ENCODE measurements at regions of chr6 and their contacts with region 1.

Region 1: GRCh38 chr6:53718597-53719460 is 53.3 kb upstream of the KLHL31 start:
- DNase-seq: peak; percentile 45
- H3K4me3 ChIP-seq: no peak overlapping the region; a peak in 1 of 4 replicates
- H3K27ac ChIP-seq: no peak overlapping the region
- H3K4me1 ChIP-seq: no peaks in the 10 kb centered on the region
- H3K27me3 ChIP-seq: peaks cover 37% of the 10 kb centered on the region; the same call in 1 of the 2 replicates
- CTCF ChIP-seq: peak; percentile 84
- EP300 ChIP-seq: no peak
- RAD21 ChIP-seq: peak; percentile 54

Region 2: DNA sequence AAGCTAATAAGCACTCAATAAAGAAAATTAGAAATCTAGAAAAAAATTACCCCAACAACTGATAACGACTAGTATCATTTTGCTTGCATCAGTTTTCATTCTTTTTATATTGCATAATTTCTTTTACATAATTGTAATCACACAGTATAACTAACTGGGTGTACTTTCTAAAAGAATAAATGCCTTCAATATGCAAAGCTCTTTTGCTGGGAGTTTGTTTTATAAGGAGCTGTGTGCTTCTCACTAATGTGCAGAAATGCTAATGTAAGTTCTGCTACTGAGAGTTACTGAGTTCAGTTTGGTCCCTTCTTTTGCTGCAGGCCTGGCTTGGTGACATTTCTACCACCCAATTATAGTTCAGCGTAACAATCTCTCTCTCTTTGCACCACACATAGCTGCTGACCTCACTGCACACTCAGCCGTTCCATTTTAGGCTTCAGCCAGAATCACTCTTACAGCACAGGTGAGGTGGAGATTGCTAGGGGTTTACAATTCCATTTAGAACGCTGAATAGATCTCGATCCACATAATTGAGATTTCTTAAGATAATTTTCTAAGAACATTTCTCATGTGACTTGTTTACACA is 32.4 kb before region 1 on chr6:
- CTCF ChIA-PET with region 1: interaction called, 16 read pairs
- POLR2A ChIA-PET with region 1: no interaction called
- DNase-seq: no peak
- H3K4me3 ChIP-seq: no peak overlapping the region
- H3K27ac ChIP-seq: no peak overlapping the region
- H3K4me1 ChIP-seq: no peaks in the 10 kb centered on the region
- H3K27me3 ChIP-seq: no peaks in the 10 kb centered on the region; the same call in 1 of the 2 replicates
- CTCF ChIP-seq: no peak
- EP300 ChIP-seq: no peak
- RAD21 ChIP-seq: no peak

Region 3: DNA sequence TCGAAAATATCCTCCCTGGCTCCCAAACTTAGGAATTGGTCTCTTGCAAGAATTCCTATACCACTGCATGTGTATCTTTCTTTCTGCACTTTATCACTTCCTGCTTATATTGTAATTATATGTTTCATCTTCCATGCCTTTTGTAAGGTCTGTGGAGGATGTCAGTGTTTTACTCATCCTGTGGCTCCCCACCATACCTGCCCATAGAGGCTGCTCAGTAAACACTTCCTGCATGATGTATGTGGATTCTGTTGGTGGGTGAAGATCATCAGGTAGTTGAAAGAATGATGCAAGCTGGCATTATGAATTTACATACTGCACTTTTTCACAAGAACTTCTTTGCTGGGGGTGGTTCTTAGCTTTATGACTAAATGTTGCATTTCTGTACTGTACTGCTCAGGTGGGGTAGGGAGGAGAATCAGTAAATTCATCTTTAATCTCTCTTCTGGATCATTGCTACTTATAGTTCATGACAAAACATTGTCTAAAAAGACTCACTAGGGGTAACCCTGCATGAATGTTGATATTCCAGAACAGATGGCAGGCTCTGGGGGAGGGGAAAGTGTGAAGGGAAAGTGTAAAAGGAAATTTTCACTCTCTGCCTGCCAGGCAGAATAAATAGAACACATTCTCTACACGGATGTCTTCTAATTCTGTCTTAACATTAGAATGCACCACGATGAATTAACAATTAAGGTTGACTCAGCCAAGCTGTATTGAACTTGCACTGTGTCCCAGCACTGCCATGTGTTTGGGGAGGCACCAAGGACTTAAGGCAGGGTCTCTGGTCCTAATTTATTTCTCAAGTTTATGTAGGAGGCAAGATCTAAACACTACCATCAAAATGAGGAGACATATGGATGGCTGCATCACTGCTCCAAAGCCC is 17.3 kb before region 1 on chr6:
- CTCF ChIA-PET with region 1: interaction called, 154 read pairs
- POLR2A ChIA-PET with region 1: no interaction called
- DNase-seq: no peak
- H3K4me3 ChIP-seq: no peak overlapping the region
- H3K27ac ChIP-seq: no peak overlapping the region
- H3K4me1 ChIP-seq: no peaks in the 10 kb centered on the region
- H3K27me3 ChIP-seq: peaks cover 3% of the 10 kb centered on the region; the same call in 1 of the 2 replicates
- CTCF ChIP-seq: no peak
- EP300 ChIP-seq: no peak
- RAD21 ChIP-seq: no peak

Region 4: DNA sequence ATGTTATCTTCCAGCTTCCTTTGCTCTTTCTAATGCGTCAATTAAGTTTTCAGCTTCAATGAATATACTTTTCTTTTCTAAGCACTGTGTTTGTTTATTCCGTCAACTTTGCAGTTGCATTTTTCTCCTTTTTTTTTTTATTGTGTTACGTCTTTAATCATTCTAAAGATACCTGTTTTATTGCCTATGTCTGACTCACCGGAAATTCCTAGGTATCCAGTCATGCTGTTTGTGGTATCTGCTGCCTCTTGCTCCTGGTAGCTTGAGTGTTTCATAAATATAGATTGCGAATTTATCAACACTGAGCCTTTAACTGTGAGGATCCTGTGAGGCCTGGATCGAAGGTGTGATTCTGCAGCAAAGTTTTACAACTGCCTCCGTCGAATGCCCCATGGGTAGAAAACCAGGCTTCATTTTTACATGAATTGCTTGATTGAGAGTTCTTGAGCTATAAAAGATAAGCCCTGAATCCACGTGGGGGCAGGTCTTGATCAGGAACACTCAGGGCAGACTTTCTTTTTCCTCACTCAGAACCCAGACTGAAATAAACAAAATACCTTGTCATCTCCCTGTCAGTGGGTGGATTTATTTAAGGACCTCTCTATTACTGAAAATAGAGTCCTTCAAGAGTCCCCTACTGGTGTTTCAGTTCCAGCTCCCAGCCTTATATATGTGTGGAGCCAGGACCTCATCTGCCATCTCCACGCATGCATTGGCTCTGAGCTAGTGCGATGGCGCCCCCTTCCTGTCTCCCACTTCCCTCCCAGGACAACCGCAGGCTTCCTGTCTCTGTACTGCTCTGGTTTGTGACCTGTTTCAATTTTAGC is 15.9 kb after region 1 on chr6:
- CTCF ChIA-PET with region 1: interaction called, 154 read pairs
- POLR2A ChIA-PET with region 1: no interaction called
- DNase-seq: peak; percentile 9
- H3K4me3 ChIP-seq: peak overlapping the region in 1 of 2 experiments; percentile 14; a peak in 1 of 4 replicates
- H3K27ac ChIP-seq: peak overlapping the region; percentile 1 to 28; a peak in 1 of 4 replicates
- H3K4me1 ChIP-seq: no peaks in the 10 kb centered on the region; a peak in 2 of 4 replicates
- H3K27me3 ChIP-seq: no peaks in the 10 kb centered on the region
- CTCF ChIP-seq: peak; percentile 46
- EP300 ChIP-seq: 0 out of 4 replicates have a peak, but pooled peaks of 1 of the 2 experiments have one; percentile 17
- RAD21 ChIP-seq: 0 out of 2 replicates have a peak, but pooled peaks have one; percentile 7

Region 5: DNA sequence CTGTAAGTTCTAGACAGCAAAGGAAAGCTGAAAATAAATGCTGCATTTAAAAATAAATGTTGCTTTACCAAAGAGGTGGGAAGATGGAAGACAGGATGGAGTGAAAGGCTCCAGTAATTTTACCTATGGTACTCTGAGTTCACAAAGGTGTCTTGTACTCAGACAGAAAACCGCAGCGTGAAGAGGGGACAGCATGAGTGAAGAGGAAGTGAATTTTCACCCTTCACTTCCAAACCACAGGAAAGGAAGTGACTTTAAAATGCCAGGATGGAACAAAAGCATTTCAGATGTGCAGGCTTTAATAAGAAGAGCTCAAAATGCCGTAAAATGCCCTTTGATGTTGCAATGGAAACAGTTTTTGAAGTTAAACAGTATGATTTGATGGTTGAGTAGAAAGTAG is 498.2 kb after region 1 on chr6:
- CTCF ChIA-PET with region 1: no interaction called
- POLR2A ChIA-PET with region 1: no interaction called
- DNase-seq: no peak
- H3K4me3 ChIP-seq: no peak overlapping the region
- H3K27ac ChIP-seq: no peak overlapping the region
- H3K4me1 ChIP-seq: no peaks in the 10 kb centered on the region
- H3K27me3 ChIP-seq: no peaks in the 10 kb centered on the region
- CTCF ChIP-seq: no peak
- EP300 ChIP-seq: no peak
- RAD21 ChIP-seq: no peak

Measured in SK-N-SH (cell line).